Pancreas (tissue), 10 donors: ENCODE measurements at regions of chr16 and their contacts with region 1.

Region 1: GRCh38 chr16:2142942-2143877 is 5.2 kb upstream of the RAB26 start:
- DNase-seq: peak in 2 of 6 donors; percentile 18 to 53
- ATAC-seq: peak in 1 of 4 donors; percentile 12
- H3K4me3 ChIP-seq: no peak overlapping the region
- H3K27ac ChIP-seq: no peak overlapping the region
- H3K4me1 ChIP-seq: peaks cover 0 to 6% (median 5%) of the 10 kb centered on the region in 3 donors
- H3K27me3 ChIP-seq: no peaks in the 10 kb centered on the region
- CTCF ChIP-seq: no peak

Region 2: GRCh38 chr16:2023098-2023925 is 119.9 kb before region 1 on chr16:
- intact Hi-C with region 1: loop called in 2 of 3 experiments (anchors 5 kb)
- DNase-seq: peak; percentile 86 to 99 (median 97)
- ATAC-seq: peak; percentile 87 to 96 (median 92)
- H3K4me3 ChIP-seq: peak overlapping the region in 2 of 4 donors; percentile 34 to 36
- H3K27ac ChIP-seq: peak overlapping the region in 2 of 4 donors; percentile 13 to 44
- H3K4me1 ChIP-seq: peaks cover 0 to 10% (median 4%) of the 10 kb centered on the region in 3 donors
- H3K27me3 ChIP-seq: peaks cover 0 to 7% (median 0%) of the 10 kb centered on the region in 4 donors
- CTCF ChIP-seq: peak; percentile 93 to 95 (median 94)

Region 3: GRCh38 chr16:3797904-3798811 is 1654.9 kb after region 1 on chr16:
- intact Hi-C with region 1: no loop called
- DNase-seq: no peak
- ATAC-seq: peak in 3 of 4 donors; percentile 37 to 47 (median 41)
- H3K4me3 ChIP-seq: no peak overlapping the region
- H3K27ac ChIP-seq: no peak overlapping the region
- H3K4me1 ChIP-seq: peaks cover 0 to 23% (median 22%) of the 10 kb centered on the region in 3 donors
- H3K27me3 ChIP-seq: no peaks in the 10 kb centered on the region
- CTCF ChIP-seq: no peak